HEK293 (cell line): ENCODE measurements at regions of chr10 and their contacts with region 1.

Region 1: DNA sequence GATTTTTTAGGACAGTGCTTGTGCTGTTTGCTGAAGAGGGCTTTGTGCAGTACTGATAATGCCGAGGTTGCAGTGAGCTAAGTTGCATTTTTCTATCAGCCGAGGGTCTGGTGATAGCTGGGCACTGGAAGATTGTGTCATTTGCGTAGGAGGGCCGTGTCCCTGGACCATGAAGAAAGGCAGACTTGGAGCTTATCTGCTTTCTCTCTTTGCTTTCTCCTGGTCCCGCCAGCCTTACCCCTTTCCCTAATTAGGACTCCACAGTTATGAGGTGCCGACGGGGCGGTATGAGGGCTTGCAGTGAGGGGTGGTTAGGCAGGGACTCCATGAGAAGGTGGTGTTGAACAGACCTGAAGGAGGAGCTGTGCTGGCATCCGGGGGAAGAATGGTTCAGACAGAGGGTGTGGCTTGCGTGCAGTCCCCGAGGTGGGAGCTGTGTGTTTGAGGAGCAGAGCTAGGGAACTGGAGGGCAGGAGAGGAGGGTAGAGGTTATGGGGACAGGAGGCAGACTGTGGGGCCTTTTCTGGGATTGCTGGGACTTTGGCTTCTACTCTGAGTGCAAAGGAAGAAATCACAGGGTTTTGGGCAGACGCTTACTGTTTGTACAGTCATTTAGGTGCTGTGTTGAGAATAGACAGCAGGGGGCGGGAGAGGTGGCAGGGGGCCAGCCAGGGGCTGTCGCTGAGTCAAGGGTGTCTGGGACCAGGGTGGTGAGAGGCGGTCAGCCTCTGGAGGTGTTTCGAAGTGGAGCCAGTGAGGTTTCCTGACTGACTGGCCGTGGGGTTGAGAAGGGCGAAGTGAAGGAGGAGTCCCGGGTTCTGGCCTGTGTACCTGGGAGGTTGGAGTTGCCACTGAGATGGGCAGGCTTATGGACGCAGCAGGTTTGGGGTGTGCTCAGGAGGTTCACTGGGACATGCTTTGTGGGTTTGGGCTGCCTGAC is 43.4 kb downstream of the PRF1 start:
- H3K4me3 ChIP-seq: no peak overlapping the region; the same call in 1 of the 2 replicates
- H3K27ac ChIP-seq: no peak overlapping the region
- H3K4me1 ChIP-seq: no peaks in the 10 kb centered on the region; the same call in 1 of the 2 replicates
- CTCF ChIP-seq: peak; percentile 83

Region 2: DNA sequence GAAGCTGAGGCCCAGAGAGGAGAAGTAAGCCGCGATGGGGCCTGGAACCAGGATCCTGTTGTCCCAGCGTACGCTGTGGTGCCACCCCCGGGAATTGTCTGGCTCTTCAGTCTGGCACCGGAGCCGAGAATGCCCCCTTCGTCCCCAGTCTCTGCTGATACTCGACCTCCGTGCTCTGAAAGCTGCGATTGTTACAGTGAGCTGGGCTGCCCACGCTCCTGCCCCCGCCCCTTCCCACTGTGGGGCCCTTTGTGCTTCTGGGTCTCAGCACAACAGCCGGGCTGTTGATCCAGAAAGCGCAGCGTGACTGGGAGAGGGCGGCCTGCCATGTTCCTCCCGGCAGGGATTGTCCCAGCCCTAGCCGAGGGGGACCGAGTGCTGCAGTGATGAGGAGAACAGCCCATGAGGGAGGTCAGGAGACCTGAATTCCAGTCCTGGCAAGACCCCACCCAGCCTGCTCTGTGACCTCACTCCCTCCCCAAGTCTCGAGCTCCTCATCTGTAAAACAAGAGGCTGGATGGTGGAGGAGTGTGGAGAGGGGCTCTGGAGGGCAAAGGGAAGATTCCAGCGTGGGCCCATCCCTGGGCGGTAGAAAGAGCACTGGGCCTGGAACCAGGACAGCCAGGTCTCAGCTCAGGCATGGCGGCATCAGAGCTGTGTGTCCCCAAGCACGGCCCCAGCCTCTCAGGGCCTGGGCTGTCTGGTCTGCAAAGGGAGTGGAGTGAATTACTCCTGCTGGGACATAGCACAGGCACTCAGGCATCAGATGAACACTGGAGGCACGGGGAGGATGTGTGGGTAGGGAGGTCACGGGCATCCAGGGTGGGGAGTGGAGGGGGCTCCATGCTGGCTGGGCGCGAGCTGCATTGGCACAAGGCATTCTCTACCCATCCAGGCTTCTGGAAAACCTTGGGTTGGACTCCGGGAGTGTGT is 1064.2 kb before region 1 on chr10:
- CTCF ChIA-PET with region 1: no interaction called
- POLR2A ChIA-PET with region 1: no interaction called
- H3K4me3 ChIP-seq: no peak overlapping the region
- H3K27ac ChIP-seq: no peak overlapping the region
- H3K4me1 ChIP-seq: no peaks in the 10 kb centered on the region
- CTCF ChIP-seq: no peak

Region 3: GRCh38 chr10:70272925-70273316 is 286.2 kb before region 1 on chr10:
- CTCF ChIA-PET with region 1: no interaction called
- POLR2A ChIA-PET with region 1: no interaction called
- H3K4me3 ChIP-seq: no peak overlapping the region
- H3K27ac ChIP-seq: no peak overlapping the region
- H3K4me1 ChIP-seq: no peaks in the 10 kb centered on the region
- CTCF ChIP-seq: no peak

Region 4: DNA sequence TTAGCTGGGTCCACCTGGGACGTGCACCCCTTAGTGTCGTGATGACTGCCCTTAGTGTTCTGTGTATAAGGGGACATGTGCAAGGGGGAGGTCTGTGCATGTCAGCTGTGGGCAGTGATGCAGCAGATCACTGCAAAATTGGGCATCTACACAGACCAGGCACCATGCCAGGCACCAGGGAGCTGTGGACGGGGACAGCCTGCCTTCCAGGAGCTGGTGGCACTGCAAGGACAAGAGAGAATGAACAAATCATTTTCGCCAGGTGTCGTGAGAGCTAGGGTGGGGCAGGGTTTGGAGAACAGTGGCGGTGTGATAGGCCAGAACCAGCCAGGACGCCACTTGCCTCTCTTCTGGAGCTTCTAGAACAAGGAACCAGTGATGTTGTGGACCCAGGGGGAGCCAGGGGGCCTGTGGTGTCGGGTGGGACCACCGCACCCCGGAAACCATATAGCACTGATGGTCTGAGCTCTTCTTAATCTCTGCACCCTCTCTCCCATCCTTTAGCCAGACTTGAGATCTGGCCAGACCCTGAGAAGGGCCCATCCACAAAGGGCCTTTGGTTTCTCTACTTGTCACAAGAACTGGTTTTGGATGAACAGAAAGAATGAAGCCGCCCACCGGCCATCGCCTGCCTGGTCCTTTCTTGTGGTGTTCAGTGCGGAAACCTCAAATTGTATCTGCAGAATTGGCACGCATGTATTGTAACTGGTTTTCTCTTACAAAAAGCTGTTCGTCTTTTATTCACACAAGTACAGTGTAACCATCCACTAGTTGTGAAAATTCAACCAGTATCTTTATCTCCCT is 12.7 kb after region 1 on chr10:
- CTCF ChIA-PET with region 1: interaction called, 13 read pairs
- POLR2A ChIA-PET with region 1: interaction called, 4 read pairs
- H3K4me3 ChIP-seq: no peak overlapping the region
- H3K27ac ChIP-seq: no peak overlapping the region
- H3K4me1 ChIP-seq: peaks cover 3% of the 10 kb centered on the region; the same call in 1 of the 2 replicates
- CTCF ChIP-seq: no peak

Region 5: GRCh38 chr10:70758757-70759514 is 199.8 kb after region 1 on chr10:
- CTCF ChIA-PET with region 1: interaction called, 17 read pairs
- POLR2A ChIA-PET with region 1: no interaction called
- H3K4me3 ChIP-seq: no peak overlapping the region
- H3K27ac ChIP-seq: no peak overlapping the region
- H3K4me1 ChIP-seq: no peaks in the 10 kb centered on the region
- CTCF ChIP-seq: peak; percentile 63; the same call in 1 of the 2 replicates

Region 6: GRCh38 chr10:70880077-70880534 is 321.0 kb after region 1 on chr10:
- CTCF ChIA-PET with region 1: interaction called, 11 read pairs
- POLR2A ChIA-PET with region 1: no interaction called
- H3K4me3 ChIP-seq: no peak overlapping the region
- H3K27ac ChIP-seq: no peak overlapping the region
- H3K4me1 ChIP-seq: no peaks in the 10 kb centered on the region
- CTCF ChIP-seq: peak; percentile 69

Region 7: DNA sequence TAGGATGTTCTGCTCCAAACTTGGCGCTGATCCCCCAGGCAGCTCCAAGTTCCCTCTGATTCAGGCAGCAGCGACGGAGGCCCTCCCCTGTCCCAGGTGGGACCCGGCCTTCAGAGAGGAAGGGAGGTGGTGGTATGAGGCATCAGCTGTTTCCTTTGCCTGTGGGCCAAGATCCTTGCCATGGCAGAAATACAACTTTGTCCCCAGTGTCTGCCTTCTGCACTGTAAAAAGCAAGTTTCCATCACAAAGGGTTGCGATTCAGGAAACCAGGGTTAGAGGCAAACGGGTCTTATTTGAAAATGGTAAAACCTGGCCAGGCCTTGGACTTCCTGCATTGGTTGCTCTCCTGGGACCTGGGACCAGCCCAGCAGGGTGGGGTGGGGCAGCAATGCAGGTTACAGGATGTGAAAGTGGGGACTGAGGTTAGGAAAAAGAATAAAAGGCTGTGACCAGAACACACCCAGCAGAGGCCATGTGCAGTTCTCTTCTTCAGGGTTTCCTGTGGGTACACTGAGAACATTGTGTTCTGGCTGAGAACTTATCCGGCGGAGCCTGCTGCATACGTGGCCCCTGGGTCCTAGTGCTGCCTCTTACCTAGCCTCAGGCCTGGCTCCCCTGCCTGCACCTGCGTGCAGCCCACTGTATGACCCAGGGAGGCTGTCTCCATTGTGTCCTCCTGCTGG is 1689.5 kb after region 1 on chr10:
- CTCF ChIA-PET with region 1: no interaction called
- POLR2A ChIA-PET with region 1: no interaction called
- H3K4me3 ChIP-seq: no peak overlapping the region
- H3K27ac ChIP-seq: peak overlapping the region; percentile 71
- H3K4me1 ChIP-seq: peaks cover 20% of the 10 kb centered on the region
- CTCF ChIP-seq: no peak